Naive thymus-derived CD8-positive, alpha-beta T cell (primary cell): ENCODE measurements at regions of chr21 and their contacts with region 1.

Region 1: DNA sequence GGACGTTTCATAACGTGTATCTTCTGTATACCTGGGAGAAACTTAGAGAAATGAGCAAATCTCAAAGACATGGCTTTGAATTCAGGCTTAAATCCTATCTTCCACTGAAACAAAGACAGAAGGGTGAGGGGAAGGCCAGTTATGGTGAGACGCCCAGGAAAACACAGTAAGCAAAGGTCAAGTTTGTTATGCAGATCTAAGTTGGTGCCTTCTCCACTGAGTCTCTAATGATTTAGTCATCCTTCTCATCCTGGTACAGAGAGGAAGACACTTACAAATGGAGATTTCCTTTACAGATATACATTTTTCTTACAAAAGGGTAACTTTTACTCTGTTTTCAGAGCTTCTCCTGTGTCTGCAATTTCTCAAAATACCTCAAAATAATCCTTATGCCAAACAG is 64.4 kb downstream of the MAP3K7CL start:
- DNase-seq: no peak
- ATAC-seq: no peak
- H3K4me3 Mint-ChIP-seq: peak overlapping the region in 1 of 10 donors; percentile 39
- H3K27ac Mint-ChIP-seq: peak overlapping the region in 1 of 10 donors; percentile 11
- H3K4me1 Mint-ChIP-seq: peaks cover 6 to 43% (median 18%) of the 10 kb centered on the region in 4 donors
- H3K27me3 Mint-ChIP-seq: peaks cover 0 to 3% (median 0%) of the 10 kb centered on the region in 5 donors

Region 2: GRCh38 chr21:29163341-29164115 is 31.3 kb before region 1 on chr21:
- POLR2A ChIA-PET with region 1: interaction called, 10 read pairs
- DNase-seq: no peak
- ATAC-seq: no peak
- H3K4me3 Mint-ChIP-seq: no peak overlapping the region
- H3K27ac Mint-ChIP-seq: no peak overlapping the region
- H3K4me1 Mint-ChIP-seq: peaks cover 0 to 3% (median 0%) of the 10 kb centered on the region in 4 donors
- H3K27me3 Mint-ChIP-seq: no peaks in the 10 kb centered on the region